ENCODE measurements at regions of chr12 and their contacts with region 1.

Region 1: DNA sequence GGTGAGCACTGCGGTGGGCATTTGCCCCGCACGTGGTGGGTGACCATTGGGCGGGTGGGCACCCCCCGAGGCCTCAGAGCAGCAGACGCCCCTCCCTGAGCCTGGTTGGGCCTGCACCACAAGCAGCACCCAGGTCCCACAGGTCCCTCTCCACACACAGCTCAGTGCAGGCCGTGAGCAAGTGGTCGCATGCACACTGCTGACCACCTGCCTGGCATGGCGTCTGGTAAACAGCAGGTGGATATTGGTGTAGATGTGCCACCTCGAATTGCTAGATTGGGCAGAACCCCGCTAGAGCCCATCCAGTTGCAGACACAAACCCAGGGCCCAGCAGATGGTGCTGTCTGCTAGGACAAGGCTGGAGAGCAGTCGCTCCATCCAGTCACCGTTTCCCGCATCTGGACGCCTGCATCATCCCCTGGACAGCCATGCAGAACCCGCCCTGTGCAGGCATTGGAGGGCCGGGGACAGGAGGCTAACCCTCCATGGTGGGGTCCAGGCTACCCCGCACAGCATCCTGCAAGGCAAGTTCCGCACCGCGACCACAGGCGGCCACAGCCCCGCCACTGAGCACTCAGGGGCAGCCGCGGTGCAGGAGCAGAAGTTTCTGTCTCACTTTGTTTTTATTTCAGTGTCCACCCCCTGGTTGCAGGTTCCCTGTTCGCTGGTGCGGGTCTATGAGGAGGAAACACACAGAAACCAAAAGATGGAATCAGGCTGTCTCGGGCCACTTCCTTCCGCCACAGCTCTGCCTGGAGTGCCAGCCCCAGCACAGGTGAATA is 45.6 kb upstream of the RIMBP2 start:
- DNase-seq: no peak
- ATAC-seq: peak; percentile 61
- H3K4me3 ChIP-seq: no peak overlapping the region
- H3K27ac ChIP-seq: no peak overlapping the region
- H3K4me1 ChIP-seq: no peaks in the 10 kb centered on the region
- H3K27me3 ChIP-seq: no peaks in the 10 kb centered on the region

Region 2: DNA sequence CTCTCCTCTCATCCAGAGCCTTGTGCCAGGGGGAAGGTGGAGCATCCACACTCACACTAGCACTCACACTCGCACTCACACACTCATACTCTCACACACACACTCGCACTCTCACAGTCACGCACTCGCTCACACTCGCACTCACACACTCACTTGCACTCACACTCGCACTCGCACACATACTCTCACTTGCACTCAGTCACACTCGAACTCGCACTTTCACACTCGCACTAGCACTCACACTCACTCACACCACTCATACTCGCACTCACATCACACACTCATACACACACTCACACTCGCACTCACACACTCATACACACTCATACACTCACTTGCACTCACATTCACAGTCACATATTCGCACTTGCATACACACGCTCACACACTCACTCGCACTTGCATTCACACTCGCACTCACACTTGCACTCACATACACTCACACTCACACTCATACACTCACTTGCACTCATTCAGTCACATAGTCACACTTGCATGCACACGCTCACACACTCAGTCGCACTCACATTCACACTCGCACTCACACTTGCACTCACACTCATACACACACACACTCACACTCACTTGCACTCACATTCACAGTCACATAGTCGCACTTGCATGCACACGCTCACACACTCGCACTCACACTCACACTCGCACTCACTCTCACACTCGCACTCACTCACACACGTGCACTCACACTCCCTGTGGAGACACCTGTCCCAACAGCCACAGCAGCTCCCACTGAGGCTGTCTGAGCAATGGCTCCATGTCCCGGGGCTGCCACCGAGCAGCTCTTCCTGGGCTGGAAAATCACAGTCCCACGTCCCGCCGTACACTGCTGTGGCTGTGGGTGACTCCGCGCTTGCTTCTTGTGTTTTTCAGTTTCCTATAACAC is 33.3 kb before region 1 on chr12:
- intact Hi-C with region 1: no loop called
- DNase-seq: no peak
- ATAC-seq: no peak
- H3K4me3 ChIP-seq: no peak overlapping the region
- H3K27ac ChIP-seq: no peak overlapping the region
- H3K4me1 ChIP-seq: no peaks in the 10 kb centered on the region
- H3K27me3 ChIP-seq: no peaks in the 10 kb centered on the region

Region 3: DNA sequence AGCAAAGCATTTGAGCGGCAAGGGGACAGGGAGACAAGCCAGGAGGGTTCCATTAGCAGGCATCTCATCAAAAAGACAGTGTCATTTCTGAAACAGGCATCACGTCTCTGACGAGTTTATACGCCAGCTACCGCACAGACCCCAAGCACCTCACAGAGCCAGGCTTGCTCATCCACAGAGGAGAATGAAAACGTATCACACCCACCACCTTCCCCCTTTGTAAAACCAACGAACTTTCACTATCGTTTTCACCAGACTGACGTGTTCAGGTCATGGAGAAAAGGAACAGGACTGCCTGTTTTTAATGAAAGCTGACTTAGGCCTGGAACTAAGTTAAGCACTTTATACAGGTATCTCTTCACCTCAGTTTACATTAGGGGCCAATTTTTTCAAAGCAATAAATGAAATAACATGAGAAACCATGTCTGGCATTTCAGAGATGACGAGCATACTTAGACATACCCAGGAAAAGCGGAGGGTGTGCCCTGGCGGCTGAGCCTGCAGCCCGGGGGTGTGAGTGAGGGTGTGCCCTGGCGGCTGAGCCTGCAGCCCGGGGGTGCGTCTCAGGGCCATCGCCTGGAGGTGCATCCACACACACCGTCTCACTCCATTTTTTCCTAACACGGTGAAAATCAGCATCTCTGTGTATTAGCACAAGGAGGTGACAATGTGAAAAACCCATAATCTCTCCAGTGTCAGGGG is 35.4 kb after region 1 on chr12:
- intact Hi-C with region 1: no loop called
- DNase-seq: no peak
- ATAC-seq: no peak
- H3K4me3 ChIP-seq: no peak overlapping the region
- H3K27ac ChIP-seq: no peak overlapping the region
- H3K4me1 ChIP-seq: no peaks in the 10 kb centered on the region
- H3K27me3 ChIP-seq: no peaks in the 10 kb centered on the region

Region 4: GRCh38 chr12:130818635-130819576 is 57.2 kb after region 1 on chr12:
- intact Hi-C with region 1: loop called in 1 of 2 experiments (anchors 5 kb)
- DNase-seq: peak; percentile 73 to 89
- ATAC-seq: peak; percentile 94
- H3K4me3 ChIP-seq: no peak overlapping the region
- H3K27ac ChIP-seq: no peak overlapping the region
- H3K4me1 ChIP-seq: no peaks in the 10 kb centered on the region
- H3K27me3 ChIP-seq: no peaks in the 10 kb centered on the region

Measured in aorta (tissue), 5 donors.